ENCODE measurements at regions of chr18 and their contacts with region 1.

Region 1: DNA sequence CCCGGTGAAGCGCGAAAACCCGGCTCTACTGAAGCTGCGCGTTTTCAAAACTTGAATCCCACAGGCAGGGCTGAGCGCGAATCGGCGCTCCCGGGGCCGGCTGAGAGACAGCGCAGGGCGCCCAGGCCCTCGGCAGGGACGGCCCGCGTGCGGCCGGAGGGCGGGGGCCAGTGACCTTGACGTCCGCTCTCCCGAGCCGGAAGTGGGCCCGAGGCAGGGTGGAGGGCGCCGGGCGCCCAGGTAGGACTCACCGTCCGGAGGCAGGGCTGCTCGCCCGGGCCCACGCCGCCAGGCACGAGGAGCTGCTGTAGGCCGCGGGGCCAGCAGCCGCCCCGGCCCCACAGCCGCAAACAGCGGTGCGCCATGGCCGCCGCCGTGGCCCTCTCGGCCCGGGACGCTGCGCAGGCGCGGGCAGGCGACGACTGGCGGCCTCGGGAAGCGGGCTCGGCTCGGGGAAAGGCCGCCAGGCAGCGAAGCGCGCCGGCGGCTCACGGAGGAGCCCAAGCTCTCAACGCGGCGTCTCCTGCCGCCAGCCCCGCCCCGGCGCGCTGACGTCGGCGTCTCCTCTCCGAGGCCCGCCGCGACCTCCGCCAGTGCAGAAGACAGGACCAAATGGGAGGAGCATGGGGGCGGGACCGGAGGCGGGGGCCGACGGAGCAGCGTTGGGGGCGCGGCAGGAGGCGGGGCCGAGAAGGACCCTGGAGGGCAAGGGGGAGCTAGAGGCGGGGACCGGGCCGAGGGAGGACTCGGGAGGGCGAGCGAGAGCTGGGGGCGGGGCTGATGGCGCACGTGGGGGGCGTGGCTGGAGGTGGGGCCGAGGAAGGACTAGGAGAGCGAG is at the start of gene AFG3L2:
- DNase-seq: peak; percentile 98
- H3K4me3 Mint-ChIP-seq: peak within 1 kb of the TSS; percentile 85
- H3K27ac Mint-ChIP-seq: peak within 1 kb of the TSS; percentile 90
- H3K4me1 Mint-ChIP-seq: peaks cover 24% of the 10 kb centered on the region
- H3K27me3 Mint-ChIP-seq: no peaks in the 10 kb centered on the region
- CTCF ChIP-seq: no peak
- total RNA-seq, gene AFG3L2: 56.7 and 77.2 TPM in 2 replicates

Region 2: DNA sequence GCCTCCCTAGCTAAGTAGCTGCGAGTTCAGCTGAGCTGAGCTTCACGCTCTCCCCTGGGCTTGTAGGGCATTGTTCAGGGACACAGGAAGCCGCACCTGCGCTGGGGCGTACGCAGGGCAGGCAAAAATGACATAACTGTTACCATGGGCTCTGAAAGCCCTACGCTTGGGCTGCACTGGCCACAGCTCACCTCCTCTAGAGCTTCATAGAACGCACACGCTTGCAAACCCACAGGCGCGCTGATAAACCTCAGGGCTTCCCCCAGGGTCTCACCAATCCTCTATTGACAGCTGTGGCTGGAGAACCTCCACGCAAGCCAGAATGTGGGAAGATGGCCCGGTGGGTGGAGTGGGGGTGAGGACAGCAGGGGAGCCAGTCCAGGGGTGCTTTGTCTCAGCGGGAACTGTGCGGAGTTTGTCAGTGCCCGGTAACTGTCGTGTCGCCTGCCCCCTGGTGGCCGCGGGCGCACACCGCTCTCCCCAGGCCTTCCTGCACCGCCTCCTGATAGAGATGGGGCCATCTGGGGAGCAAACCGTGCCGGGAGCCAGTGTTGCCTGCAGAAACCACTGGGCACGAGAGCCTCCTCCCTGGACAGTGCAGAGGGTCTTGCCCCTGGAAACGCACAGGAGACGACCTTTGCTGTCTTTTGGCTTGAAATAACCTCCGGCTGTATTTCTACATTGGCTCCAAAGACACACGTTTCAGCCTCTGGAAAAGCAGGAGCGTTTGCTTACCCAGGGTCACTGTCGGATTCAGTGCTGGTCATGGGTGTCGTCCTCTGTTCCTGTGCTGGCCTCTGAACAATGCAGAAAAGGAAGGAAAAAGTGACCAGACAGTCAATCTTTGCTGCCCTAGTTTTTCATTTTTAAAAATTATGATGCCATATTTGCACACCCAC is 139.8 kb before region 1 on chr18:
- CTCF ChIA-PET with region 1: no interaction called
- POLR2A ChIA-PET with region 1: no interaction called
- intact Hi-C with region 1: no loop called
- DNase-seq: peak; percentile 65
- H3K4me3 Mint-ChIP-seq: no peak overlapping the region
- H3K27ac Mint-ChIP-seq: no peak overlapping the region
- H3K4me1 Mint-ChIP-seq: peaks cover 7% of the 10 kb centered on the region
- H3K27me3 Mint-ChIP-seq: peaks cover 21% of the 10 kb centered on the region
- CTCF ChIP-seq: peak; percentile 88

Region 3: GRCh38 chr18:12287684-12288402 is 89.1 kb before region 1 on chr18:
- CTCF ChIA-PET with region 1: no interaction called
- POLR2A ChIA-PET with region 1: interaction called, 22 read pairs
- intact Hi-C with region 1: no loop called
- DNase-seq: peak; percentile 78
- H3K4me3 Mint-ChIP-seq: peak overlapping the region; percentile 82
- H3K27ac Mint-ChIP-seq: peak overlapping the region; percentile 99
- H3K4me1 Mint-ChIP-seq: peaks cover 22% of the 10 kb centered on the region
- H3K27me3 Mint-ChIP-seq: no peaks in the 10 kb centered on the region
- CTCF ChIP-seq: no peak

Region 4: DNA sequence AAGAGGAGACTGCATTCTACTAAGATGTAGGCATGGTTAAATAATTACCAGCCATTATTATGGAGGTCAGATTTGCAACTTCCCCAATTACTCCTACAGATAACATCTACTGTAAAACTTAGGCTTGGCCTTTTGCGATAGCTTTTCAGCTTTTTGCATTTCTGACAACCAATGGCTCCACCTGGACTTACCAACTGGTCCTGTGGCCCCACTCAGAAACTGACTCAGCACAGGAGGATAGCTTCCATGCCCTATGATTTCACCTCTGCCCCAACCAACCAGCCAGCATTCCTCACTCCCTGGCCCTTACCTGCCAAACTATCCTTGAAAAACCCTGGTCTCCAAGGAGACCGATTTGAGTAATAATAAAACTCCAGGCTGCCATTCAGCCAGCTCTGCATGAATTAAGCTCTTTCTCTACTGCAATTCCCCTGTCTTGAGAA is 40.7 kb before region 1 on chr18:
- CTCF ChIA-PET with region 1: interaction called, 3 read pairs
- POLR2A ChIA-PET with region 1: interaction called, 10 read pairs
- intact Hi-C with region 1: no loop called
- DNase-seq: peak; percentile 25
- H3K4me3 Mint-ChIP-seq: no peak overlapping the region
- H3K27ac Mint-ChIP-seq: no peak overlapping the region
- H3K4me1 Mint-ChIP-seq: peaks cover 22% of the 10 kb centered on the region
- H3K27me3 Mint-ChIP-seq: no peaks in the 10 kb centered on the region
- CTCF ChIP-seq: no peak

Region 5: GRCh38 chr18:12408247-12408869 is 31.4 kb after region 1 on chr18:
- CTCF ChIA-PET with region 1: no interaction called
- POLR2A ChIA-PET with region 1: interaction called, 19 read pairs
- intact Hi-C with region 1: no loop called
- DNase-seq: peak; percentile 39
- H3K4me3 Mint-ChIP-seq: peak overlapping the region; percentile 80
- H3K27ac Mint-ChIP-seq: peak overlapping the region; percentile 74
- H3K4me1 Mint-ChIP-seq: peaks cover 20% of the 10 kb centered on the region
- H3K27me3 Mint-ChIP-seq: peaks cover 18% of the 10 kb centered on the region
- CTCF ChIP-seq: no peak

Region 6: GRCh38 chr18:12657684-12658425 is 280.9 kb after region 1 on chr18 and contains the start of gene SPIRE1:
- CTCF ChIA-PET with region 1: interaction called, 3 read pairs
- POLR2A ChIA-PET with region 1: interaction called, 13 read pairs
- intact Hi-C with region 1: no loop called
- DNase-seq: peak; percentile 68
- H3K4me3 Mint-ChIP-seq: peak within 1 kb of the TSS; percentile 86
- H3K27ac Mint-ChIP-seq: peak within 1 kb of the TSS; percentile 81
- H3K4me1 Mint-ChIP-seq: peaks cover 31% of the 10 kb centered on the region
- H3K27me3 Mint-ChIP-seq: no peaks in the 10 kb centered on the region
- CTCF ChIP-seq: no peak
- total RNA-seq, gene SPIRE1: 64.8 and 78.2 TPM in 2 replicates

Region 7: DNA sequence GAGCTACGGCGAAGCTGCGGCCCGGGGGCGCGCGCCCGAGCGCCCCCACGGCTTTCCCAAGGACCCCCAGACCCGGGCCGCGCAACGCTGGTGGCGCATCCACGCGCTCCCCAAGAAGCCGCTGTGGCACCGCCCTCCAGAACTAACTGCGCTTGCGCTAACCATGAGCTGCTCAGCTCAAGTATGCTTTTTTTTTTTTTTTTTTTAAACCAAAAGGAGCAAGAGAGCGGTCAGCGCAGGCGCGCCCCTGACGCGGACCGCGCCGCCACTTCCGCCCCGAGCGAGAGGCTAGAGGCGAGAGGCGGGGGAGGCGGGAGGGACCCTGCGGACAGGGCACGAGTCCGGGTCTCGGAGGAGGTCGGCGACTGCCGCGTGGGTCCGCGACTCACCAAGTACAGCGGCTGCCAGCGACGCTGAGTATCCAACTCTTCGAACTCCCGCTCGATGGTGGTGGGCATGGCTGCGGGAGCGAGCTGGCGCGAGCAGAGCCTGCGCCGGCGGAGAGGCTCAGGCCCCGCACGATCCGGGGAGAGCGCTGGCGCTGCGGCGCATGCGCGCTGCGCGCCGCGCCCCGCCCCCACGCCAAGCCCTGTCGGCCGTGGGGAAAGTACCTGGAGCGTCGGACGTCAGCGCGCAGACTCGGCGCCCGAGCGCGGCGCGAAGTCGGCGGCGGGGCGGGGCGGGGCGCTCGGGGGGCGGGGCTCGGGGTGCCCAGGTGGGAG is 506.9 kb after region 1 on chr18 and contains the start of gene PTPN2:
- CTCF ChIA-PET with region 1: no interaction called
- POLR2A ChIA-PET with region 1: interaction called, 16 read pairs
- intact Hi-C with region 1: no loop called
- DNase-seq: peak; percentile 89
- H3K4me3 Mint-ChIP-seq: peak within 1 kb of the TSS; percentile 73
- H3K27ac Mint-ChIP-seq: peak within 1 kb of the TSS; percentile 96
- H3K4me1 Mint-ChIP-seq: peaks cover 29% of the 10 kb centered on the region
- H3K27me3 Mint-ChIP-seq: no peaks in the 10 kb centered on the region
- CTCF ChIP-seq: no peak
- total RNA-seq, gene PTPN2: 60.0 and 75.2 TPM in 2 replicates

Measured in MCF 10A (cell line).